PC-9 (cell line): ENCODE measurements at regions of chr10 and their contacts with region 1.

Region 1: GRCh38 chr10:112471878-112472487 is 25.0 kb downstream of the VTI1A start:
- DNase-seq: peak in 1 of 2 experiments; percentile 45
- H3K4me3 ChIP-seq: no peak overlapping the region
- H3K27ac ChIP-seq: no peak overlapping the region
- H3K4me1 ChIP-seq: no peaks in the 10 kb centered on the region
- H3K27me3 ChIP-seq: no peaks in the 10 kb centered on the region
- CTCF ChIP-seq: peak; percentile 68

Region 2: GRCh38 chr10:112536663-112537062 is 64.7 kb after region 1 on chr10:
- CTCF ChIA-PET with region 1: interaction called, 10 read pairs
- POLR2A ChIA-PET with region 1: no interaction called
- intact Hi-C with region 1: no loop called
- DNase-seq: no peak
- H3K4me3 ChIP-seq: no peak overlapping the region
- H3K27ac ChIP-seq: no peak overlapping the region
- H3K4me1 ChIP-seq: no peaks in the 10 kb centered on the region
- H3K27me3 ChIP-seq: no peaks in the 10 kb centered on the region
- CTCF ChIP-seq: no peak

Region 3: GRCh38 chr10:113521123-113521795 is 1049.3 kb after region 1 on chr10:
- CTCF ChIA-PET with region 1: no interaction called
- POLR2A ChIA-PET with region 1: no interaction called
- intact Hi-C with region 1: loop called (anchors 5 kb)
- DNase-seq: peak in 1 of 2 experiments; percentile 37
- H3K4me3 ChIP-seq: no peak overlapping the region
- H3K27ac ChIP-seq: no peak overlapping the region
- H3K4me1 ChIP-seq: no peaks in the 10 kb centered on the region
- H3K27me3 ChIP-seq: no peaks in the 10 kb centered on the region; the same call in 1 of the 2 replicates
- CTCF ChIP-seq: peak; percentile 85